BJ (cell line): ENCODE measurements at regions of chr1 and their contacts with region 1.

Region 1: DNA sequence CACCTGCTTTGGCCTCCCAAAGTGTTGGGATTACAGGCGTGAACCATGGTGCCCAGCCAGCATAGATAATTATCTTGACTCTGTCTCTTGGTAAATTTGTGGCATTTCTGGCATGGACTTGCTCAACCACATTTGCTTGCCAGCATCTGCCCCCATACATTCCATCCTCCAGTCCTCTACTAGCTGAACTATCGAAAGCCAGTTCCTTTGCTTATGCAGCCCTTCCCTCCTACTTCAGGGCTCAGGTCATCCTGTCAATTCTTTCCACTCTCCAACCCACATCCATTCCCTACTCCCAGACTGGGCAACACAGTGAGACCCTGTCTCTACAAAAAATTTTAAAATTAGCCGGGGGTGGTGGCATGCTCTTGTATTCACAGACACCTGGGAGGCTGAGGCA is 13.0 kb upstream of the UQCRHL start:
- DNase-seq: no peak
- H3K4me3 ChIP-seq: no peak overlapping the region
- H3K27me3 ChIP-seq: no peaks in the 10 kb centered on the region
- CTCF ChIP-seq: no peak

Region 2: DNA sequence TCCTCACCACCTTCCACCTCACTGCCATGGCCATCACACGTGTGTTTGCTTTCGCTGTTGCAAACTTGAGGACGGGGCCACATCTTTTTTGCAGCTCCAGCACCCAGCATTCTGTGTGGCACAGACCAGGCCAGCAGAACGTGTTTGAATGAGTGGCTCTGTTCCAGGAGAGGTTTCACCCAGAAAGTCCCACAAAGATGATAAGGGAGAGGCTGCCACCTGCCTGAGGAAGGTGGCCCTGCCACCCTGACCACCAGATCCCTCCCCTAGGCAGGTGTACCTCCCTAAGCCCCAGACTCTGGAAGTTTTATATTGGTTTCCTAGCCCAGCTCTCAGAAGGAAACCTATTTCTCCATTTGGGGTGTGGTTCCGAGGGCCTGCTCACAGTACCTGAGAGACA is 969.9 kb before region 1 on chr1:
- CTCF ChIA-PET with region 1: no interaction called
- POLR2A ChIA-PET with region 1: no interaction called
- DNase-seq: no peak
- H3K4me3 ChIP-seq: no peak overlapping the region
- H3K27me3 ChIP-seq: no peaks in the 10 kb centered on the region
- CTCF ChIP-seq: no peak

Region 3: DNA sequence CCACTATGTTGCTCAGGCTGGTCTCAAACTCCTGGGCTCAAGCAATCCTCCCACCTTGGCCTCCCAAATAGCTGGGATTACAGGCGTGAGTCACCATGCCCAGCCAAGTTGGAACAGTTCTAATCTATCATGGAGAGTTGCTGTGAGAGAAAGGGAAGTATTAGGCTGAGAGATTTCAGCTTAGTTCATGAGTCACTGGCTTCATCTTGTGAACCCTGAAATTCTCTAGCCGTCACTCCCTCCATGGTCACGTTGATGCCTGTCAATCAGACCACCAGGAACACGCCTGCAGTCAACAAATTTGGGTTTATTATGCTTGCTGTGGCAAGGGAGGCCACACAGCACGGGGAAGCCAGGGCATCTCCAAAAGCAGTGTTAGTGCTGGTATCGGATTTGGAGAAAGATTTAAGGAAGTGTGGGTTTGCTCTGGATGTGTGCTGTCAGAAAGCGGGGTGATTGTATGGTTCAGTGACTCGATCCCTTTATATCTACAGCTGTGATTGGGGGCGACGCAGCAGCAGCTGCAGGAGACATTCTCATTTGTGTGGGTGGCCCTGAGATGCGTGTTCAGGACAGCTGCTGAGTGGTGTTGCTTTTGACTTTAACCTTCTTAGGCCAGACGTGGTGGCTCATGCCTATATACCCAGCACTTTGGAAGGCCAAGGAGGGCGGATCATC is 31.7 kb before region 1 on chr1:
- CTCF ChIA-PET with region 1: interaction called, 18 read pairs
- POLR2A ChIA-PET with region 1: no interaction called
- DNase-seq: no peak
- H3K4me3 ChIP-seq: no peak overlapping the region
- H3K27me3 ChIP-seq: no peaks in the 10 kb centered on the region
- CTCF ChIP-seq: no peak

Region 4: DNA sequence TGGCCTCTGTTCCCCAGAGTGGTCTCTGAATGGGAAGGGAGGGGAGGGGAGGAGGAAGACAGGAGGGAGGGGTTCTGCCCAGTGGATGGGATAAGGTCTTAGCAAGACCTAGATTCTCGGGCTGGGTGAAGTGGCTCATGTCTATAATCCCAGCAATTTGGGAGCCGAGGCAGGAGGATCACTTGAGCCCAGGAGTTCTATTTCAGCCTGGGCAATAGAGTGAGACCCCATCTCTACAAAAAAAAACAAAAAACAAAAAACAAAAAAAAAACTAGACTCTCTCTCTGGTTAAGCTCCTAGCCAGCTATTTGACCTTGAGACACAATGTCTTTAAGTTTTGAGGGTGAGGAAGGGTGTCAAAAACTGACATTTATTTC is 24.4 kb before region 1 on chr1:
- CTCF ChIA-PET with region 1: interaction called, 18 read pairs
- POLR2A ChIA-PET with region 1: no interaction called
- DNase-seq: no peak
- H3K4me3 ChIP-seq: no peak overlapping the region
- H3K27me3 ChIP-seq: no peaks in the 10 kb centered on the region
- CTCF ChIP-seq: no peak

Region 5: DNA sequence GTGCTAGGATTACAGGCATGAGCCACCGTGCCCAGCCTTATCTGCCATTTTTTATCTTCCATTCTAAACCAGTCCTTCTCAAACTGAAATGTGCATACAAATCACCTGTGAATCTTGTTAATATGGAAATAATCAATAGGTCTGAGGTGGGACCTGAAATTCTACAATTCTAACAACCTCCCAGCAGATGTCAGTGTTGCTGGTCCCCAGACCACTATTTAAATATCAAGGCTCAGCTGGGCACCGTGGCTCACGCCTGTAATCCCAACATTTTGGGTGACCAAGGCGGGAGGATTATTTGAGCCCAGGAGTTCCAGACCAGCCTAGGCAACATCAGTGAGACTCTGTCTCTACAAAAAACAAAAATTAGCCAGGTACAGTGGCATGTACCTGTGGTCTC is 17.1 kb before region 1 on chr1:
- CTCF ChIA-PET with region 1: interaction called, 19 read pairs
- POLR2A ChIA-PET with region 1: no interaction called
- DNase-seq: no peak
- H3K4me3 ChIP-seq: no peak overlapping the region
- H3K27me3 ChIP-seq: no peaks in the 10 kb centered on the region
- CTCF ChIP-seq: peak; percentile 33

Region 6: DNA sequence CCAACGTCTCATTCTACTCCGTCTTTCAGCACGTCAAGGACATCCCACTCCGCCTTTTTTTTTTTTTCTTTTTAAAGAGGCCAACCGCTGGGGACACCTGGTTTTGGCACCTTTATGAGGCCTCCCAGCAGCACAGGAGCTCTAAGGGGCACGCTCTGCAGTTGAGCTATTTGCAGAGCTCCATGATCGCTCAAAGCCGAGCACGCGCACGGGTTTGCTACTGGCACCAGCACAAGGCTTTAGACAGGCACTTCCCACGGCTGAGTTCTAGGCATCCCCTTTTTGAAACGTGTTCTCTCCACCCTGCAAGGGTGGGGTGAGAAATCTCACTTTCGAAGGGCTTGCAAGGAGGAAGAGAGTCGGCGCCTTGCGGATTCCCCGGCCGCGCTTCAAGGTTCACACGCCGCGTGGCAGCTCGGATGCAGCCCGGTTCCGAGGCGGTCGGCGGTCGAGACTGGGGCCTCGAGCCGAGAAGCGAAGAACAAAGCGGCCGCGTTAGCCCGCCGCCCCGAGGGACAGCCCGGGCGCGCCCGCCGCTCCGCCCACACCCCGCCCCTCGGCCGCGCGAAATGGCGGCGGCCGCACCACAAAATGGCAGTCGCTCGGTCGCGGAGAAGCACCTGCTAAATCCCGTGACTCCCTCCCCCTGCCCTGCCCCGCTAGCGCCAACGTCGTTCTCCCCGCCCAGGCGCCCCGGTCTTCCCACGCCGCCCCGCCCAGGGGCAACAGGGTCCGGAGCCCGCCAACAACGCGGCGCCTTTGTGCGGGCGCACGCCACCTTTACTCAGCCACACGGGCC is 14.1 kb after region 1 on chr1:
- CTCF ChIA-PET with region 1: interaction called, 7 read pairs
- POLR2A ChIA-PET with region 1: interaction called, 13 read pairs
- DNase-seq: no peak
- H3K4me3 ChIP-seq: peak overlapping the region; percentile 88
- H3K27me3 ChIP-seq: no peaks in the 10 kb centered on the region
- CTCF ChIP-seq: no peak

Region 7: DNA sequence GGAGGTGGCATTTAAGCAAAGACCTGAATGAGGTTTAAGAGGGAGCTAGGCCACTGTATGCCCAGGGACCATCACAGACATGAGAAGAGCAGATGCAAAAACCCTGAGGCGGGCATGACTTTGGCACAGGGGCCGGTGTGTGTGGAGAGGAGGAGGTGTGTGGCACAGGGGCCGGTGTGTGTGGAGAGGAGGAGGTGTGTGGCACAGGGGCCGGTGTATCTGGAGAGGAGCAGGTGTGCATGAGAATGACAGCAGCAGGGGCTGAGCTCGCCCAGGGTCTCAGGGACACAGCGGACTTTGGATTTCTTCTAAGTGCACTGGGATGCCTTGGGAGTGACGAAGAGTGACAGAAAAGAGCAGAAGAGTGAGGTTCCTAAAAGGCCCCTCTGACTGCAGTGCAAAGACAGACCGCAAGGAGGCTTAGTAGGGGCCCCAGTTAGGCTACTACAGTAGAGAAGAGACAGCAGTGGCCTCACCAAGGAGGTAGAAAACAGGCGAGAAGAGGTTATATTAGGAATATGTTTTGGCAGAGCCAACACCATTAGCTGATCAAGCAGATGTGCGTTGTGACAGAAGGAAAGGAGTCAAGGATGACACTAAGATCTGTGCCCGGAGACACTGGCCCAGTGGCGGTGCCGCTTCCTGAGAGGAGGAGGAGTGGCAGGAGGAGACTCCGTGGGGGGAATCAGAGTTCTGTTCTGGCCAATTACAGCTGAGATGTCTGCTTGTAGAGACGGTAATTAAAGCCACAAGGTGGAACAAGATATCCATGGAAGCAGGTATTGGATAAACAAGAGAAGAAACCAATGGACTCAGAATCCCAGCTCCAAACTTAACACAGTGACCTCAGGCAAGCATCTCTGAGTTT is 137.0 kb after region 1 on chr1:
- CTCF ChIA-PET with region 1: interaction called, 14 read pairs
- POLR2A ChIA-PET with region 1: no interaction called
- DNase-seq: no peak
- H3K4me3 ChIP-seq: no peak overlapping the region
- H3K27me3 ChIP-seq: no peaks in the 10 kb centered on the region
- CTCF ChIP-seq: peak; percentile 60

Region 8: DNA sequence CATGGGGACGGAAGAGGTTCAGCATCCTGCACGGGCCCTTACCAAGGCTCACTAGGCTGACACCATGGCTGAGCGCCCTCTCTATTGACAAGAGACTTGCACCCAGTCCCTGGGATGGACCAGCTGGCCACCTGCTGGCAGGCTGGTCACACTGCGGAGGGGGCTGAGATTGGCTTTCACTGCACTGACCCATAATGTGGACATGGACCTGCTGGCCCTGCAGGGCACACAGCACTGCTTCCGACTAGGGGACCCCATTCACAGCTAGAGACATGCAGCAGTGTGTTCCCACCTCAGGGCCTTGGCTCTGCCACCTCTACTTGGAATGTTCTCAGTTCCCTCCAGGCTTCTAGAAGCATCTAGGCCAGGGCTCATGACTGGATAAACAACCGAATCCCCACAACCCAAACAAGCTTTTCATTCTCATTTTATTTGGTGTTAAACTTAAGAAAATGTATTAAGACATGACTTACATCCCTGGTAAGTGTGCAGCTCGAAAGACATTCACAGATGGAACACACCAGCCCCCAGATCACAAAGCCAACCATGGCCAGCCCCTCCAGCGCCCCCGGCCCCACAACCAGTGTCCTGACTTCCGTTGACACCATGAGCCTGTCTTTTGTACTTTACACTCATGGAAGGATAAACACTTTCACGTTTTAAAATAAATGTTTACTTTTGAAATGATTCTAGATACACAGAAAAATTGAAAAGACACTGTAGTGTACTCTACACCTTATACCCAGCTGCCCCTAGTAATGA is 174.3 kb after region 1 on chr1:
- CTCF ChIA-PET with region 1: interaction called, 29 read pairs
- POLR2A ChIA-PET with region 1: no interaction called
- DNase-seq: no peak
- H3K4me3 ChIP-seq: no peak overlapping the region
- H3K27me3 ChIP-seq: peaks cover 3% of the 10 kb centered on the region
- CTCF ChIP-seq: peak; percentile 99